Naive thymus-derived CD4-positive, alpha-beta T cell (primary cell): ENCODE measurements at regions of chr20 and their contacts with region 1.

Region 1: DNA sequence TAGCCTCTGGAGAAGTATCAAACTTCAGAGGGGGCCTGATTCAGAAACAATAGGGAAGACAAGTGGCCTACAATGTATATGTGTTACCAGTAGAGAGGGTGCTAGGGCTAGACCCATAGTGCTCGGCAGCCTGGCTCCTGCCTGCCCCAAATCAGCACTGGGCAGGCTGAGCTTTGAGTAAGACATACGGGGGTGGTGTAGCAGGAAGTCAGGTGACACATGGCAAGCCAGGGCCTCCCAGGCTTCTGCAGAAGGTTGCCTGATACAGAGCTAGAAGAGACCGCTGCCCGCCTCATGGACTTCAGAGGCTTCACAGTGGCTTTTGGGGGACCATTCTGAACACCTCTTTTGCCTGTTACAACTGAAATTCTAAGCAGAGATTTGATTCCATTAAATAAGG is 43.4 kb downstream of the RALY start:
- DNase-seq: peak in 8 of 9 donors; percentile 21 to 50 (median 43)
- ATAC-seq: peak; percentile 88
- H3K4me3 ChIP-seq: no peak overlapping the region
- H3K4me3 Mint-ChIP-seq: peak overlapping the region; percentile 49 to 80 (median 60)
- H3K27ac ChIP-seq: no peak overlapping the region
- H3K27ac Mint-ChIP-seq: peak overlapping the region in 8 of 9 donors; percentile 17 to 80 (median 63)
- H3K4me1 ChIP-seq: peaks cover 12 to 33% of the 10 kb centered on the region in 2 donors
- H3K4me1 Mint-ChIP-seq: peaks cover 48 to 98% (median 95%) of the 10 kb centered on the region in 7 donors
- H3K27me3 ChIP-seq: no peaks in the 10 kb centered on the region
- H3K27me3 Mint-ChIP-seq: no peaks in the 10 kb centered on the region

Region 2: DNA sequence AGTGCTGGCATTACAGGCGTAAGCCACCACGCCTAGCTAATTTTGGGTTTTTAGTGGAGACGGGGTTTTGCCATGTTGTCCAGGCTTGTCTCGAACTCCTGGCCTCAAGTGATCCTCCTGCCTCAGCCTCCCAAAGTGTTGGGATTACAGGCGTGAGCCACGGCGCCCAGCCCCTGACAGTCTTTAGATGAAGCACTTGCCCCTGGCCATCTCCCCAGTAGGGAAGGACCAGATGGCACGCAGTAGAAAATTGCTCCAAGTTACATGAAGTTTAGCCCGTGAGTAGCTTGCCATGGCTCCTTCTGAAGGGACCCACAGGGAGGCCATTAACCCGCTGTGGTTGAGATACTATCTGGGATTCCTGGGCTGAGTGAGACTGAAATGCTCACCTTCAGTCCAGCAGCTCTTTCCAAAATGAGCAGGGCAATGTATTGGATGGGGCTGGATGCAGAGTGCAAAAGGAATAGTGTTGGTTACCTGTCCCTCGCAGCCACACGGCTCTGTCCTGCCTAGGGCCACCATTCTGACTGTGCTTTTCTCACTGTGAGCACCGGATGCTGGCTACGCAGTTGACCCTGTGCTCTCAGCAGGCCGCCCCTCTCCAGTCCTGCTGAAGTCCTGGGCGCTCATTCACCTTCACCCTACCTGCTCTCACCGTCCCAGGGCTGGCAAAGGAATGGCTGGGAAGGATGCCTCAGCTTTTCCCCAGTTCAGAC is 1111.5 kb before region 1 on chr20:
- CTCF ChIA-PET with region 1: no interaction called
- POLR2A ChIA-PET with region 1: no interaction called
- intact Hi-C with region 1: loop called in 1 of 2 experiments (anchors 5 kb)
- DNase-seq: no peak
- ATAC-seq: no peak
- H3K4me3 ChIP-seq: no peak overlapping the region
- H3K4me3 Mint-ChIP-seq: no peak overlapping the region
- H3K27ac ChIP-seq: no peak overlapping the region
- H3K27ac Mint-ChIP-seq: no peak overlapping the region
- H3K4me1 ChIP-seq: no peaks in the 10 kb centered on the region
- H3K4me1 Mint-ChIP-seq: no peaks in the 10 kb centered on the region
- H3K27me3 ChIP-seq: no peaks in the 10 kb centered on the region
- H3K27me3 Mint-ChIP-seq: peaks cover 0 to 3% (median 0%) of the 10 kb centered on the region in 5 donors

Region 3: DNA sequence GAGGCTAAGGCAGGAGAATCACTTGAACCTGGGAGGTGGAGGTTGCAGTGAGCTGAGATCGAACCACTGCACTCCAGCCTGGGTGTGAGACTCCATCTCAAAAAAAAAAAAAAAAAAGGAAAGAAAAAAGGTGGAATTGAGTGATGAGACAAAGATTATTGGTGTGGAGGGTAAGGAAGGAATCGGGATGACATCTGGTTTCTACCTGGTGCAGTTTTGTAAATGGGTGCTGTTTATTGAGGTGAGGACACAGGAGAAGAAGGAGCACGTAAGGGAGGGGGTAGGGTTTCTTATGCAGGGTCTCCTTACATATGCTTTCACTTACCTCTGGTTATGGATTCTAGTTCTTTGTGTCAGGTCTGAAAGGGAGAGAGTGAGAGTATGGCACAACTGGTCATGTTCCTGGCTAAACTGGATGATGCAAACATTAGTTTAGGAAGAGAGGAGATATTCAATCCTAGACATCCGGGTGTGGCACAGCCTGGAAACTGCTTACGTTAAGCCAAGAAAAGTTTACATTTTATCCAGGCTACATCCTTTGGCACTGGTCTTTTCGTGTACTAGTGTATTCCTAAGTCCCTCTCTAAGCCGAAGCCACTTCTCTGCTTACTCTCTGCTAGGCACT is 38.0 kb before region 1 on chr20:
- CTCF ChIA-PET with region 1: no interaction called
- POLR2A ChIA-PET with region 1: no interaction called
- intact Hi-C with region 1: no loop called
- DNase-seq: no peak
- ATAC-seq: no peak
- H3K4me3 ChIP-seq: no peak overlapping the region
- H3K4me3 Mint-ChIP-seq: peak overlapping the region in 9 of 10 donors; percentile 25 to 77 (median 60)
- H3K27ac ChIP-seq: no peak overlapping the region
- H3K27ac Mint-ChIP-seq: peak overlapping the region in 5 of 9 donors; percentile 0 to 76 (median 4)
- H3K4me1 ChIP-seq: peaks cover 61 to 67% of the 10 kb centered on the region in 2 donors
- H3K4me1 Mint-ChIP-seq: peaks cover 71 to 96% (median 85%) of the 10 kb centered on the region in 7 donors
- H3K27me3 ChIP-seq: no peaks in the 10 kb centered on the region
- H3K27me3 Mint-ChIP-seq: no peaks in the 10 kb centered on the region